Activated B cell treated with CpG ODN at 0.5 μM for 24 hours (primary cell): ENCODE measurements at regions of chr17 and their contacts with region 1.

Region 1: DNA sequence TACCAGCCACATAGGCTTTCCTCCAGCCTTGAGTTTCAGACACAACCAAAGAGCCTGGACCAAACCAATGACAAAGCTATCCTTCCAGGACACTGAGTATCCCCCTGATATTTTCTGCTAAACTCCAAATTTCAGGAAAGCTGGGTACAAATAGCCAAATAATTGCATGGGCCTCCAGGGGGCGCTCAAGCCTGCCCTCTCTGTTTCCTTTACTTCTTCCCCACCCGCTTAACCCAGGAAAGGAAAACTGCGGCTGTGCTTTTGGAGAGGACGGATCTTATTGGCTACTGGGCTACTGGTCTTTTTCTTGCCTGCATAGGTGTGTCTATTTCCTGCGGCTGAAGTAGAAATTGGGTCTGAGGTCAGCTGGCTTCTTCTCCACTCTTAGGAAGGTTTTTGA is 30.1 kb downstream of the GNGT2 start:
- DNase-seq: peak; percentile 58
- ATAC-seq: peak; percentile 52
- H3K4me3 Mint-ChIP-seq: no peak overlapping the region
- H3K27ac Mint-ChIP-seq: no peak overlapping the region
- H3K4me1 Mint-ChIP-seq: peaks cover 4% of the 10 kb centered on the region
- H3K27me3 Mint-ChIP-seq: peaks cover 1% of the 10 kb centered on the region
- CTCF ChIP-seq: peak; percentile 54

Region 2: GRCh38 chr17:48860034-48860433 is 320.3 kb before region 1 on chr17:
- CTCF ChIA-PET with region 1: no interaction called
- POLR2A ChIA-PET with region 1: no interaction called
- intact Hi-C with region 1: no loop called
- DNase-seq: no peak
- ATAC-seq: no peak
- H3K4me3 Mint-ChIP-seq: no peak overlapping the region
- H3K27ac Mint-ChIP-seq: no peak overlapping the region
- H3K4me1 Mint-ChIP-seq: no peaks in the 10 kb centered on the region
- H3K27me3 Mint-ChIP-seq: no peaks in the 10 kb centered on the region
- CTCF ChIP-seq: no peak

Region 3: DNA sequence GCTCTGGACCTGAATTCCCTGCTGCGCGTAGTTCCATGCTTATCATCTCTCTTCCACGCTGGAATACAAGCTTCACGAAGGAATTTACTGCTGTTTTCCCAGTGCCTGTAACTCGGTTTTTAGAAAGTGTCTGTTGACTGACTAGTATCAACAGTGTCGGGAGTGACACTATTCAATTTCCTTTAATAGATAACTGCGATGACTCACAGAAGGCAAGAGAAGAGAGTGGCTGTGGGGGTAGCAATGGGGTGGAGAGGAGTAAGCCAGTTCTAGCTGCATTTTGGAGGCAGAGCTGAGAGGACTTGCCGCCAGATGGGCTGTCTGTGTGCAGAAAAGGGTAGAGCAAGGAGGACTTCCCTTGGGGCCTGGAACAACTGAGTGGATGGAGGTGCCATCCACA is 22.5 kb before region 1 on chr17:
- CTCF ChIA-PET with region 1: no interaction called
- POLR2A ChIA-PET with region 1: no interaction called
- intact Hi-C with region 1: no loop called
- DNase-seq: no peak
- ATAC-seq: no peak
- H3K4me3 Mint-ChIP-seq: no peak overlapping the region
- H3K27ac Mint-ChIP-seq: no peak overlapping the region
- H3K4me1 Mint-ChIP-seq: no peaks in the 10 kb centered on the region
- H3K27me3 Mint-ChIP-seq: peaks cover 26% of the 10 kb centered on the region
- CTCF ChIP-seq: no peak

Region 4: DNA sequence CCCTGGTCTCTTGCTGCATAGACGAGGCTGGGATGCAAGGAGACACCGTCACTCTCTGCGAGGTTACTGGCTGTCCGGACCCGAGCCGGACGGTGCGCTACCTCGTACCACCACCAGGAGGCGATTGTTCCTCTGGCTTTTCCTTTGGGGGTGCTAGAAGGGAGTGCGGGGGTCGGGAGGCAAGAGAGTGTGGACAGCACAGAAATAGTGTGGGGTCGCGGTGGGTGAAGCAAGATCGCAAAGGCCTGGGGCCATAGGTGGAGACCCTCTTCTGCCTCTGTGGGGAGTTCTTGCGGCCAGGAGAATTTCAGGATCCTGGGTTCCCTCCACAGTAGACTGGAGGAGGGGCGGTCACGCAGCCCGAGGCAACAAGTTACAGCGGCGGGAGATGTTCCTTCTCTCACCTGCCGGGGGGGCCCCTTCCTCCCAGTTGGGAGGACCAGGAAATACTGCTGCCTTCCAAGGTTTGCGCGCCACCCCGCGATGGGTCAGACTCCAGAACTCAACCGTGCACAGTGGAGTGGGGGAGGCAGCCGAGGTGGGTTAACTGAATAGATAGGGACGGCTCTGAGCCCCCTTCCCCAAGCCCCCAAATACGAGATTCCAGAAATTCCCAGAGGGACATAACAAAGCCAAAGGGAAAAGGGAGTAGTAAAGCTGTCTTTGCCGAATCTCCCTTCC is 43.4 kb after region 1 on chr17:
- CTCF ChIA-PET with region 1: interaction called, 197 read pairs
- POLR2A ChIA-PET with region 1: interaction called, 4 read pairs
- intact Hi-C with region 1: loop called (anchors 1 kb)
- DNase-seq: peak; percentile 67
- ATAC-seq: peak; percentile 23
- H3K4me3 Mint-ChIP-seq: peak overlapping the region; percentile 79
- H3K27ac Mint-ChIP-seq: peak overlapping the region; percentile 41
- H3K4me1 Mint-ChIP-seq: peaks cover 42% of the 10 kb centered on the region
- H3K27me3 Mint-ChIP-seq: peaks cover 6% of the 10 kb centered on the region
- CTCF ChIP-seq: no peak

Region 5: GRCh38 chr17:49290690-49291359 is 110.5 kb after region 1 on chr17:
- CTCF ChIA-PET with region 1: interaction called, 35 read pairs
- POLR2A ChIA-PET with region 1: no interaction called
- intact Hi-C with region 1: loop called (anchors 1 kb)
- DNase-seq: no peak
- ATAC-seq: no peak
- H3K4me3 Mint-ChIP-seq: no peak overlapping the region
- H3K27ac Mint-ChIP-seq: no peak overlapping the region
- H3K4me1 Mint-ChIP-seq: no peaks in the 10 kb centered on the region
- H3K27me3 Mint-ChIP-seq: no peaks in the 10 kb centered on the region
- CTCF ChIP-seq: peak; percentile 26